Activated CD8-positive, alpha-beta T cell treated with anti-CD3 and anti-CD28 coated beads, Interleukin-2, amount 10 ng/mL, durations not matched to agents 7 days and 5 days (primary cell): ENCODE measurements at regions of chr7 and their contacts with region 1.

Region 1: GRCh38 chr7:121547544-121548092 is 151.5 kb upstream of the FAM3C start:
- DNase-seq: peak; percentile 33
- ATAC-seq: peak; percentile 82
- H3K4me3 Mint-ChIP-seq: no peak overlapping the region
- H3K27ac Mint-ChIP-seq: no peak overlapping the region
- H3K4me1 Mint-ChIP-seq: peaks cover 30% of the 10 kb centered on the region
- H3K27me3 Mint-ChIP-seq: no peaks in the 10 kb centered on the region

Region 2: DNA sequence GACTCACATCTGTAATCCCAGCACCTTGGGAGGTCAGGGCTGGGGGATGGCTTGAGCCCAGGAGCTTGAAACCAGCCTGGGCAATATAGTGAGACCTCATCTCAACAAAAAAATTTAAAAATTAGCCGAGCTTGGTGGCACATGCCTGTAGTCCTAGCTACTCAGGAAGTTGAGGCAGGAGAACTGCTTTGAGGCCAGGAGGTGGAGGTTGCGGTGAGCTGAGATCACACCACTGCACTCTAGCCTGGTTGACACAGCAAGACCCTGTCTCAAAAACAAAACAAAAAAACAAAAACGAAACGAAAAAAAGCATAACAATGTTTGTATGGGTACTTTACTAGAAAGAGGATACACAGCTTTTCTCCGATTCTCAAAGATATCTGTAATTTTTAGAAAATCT is 187.1 kb before region 1 on chr7:
- CTCF ChIA-PET with region 1: interaction called, 17 read pairs
- POLR2A ChIA-PET with region 1: no interaction called
- DNase-seq: peak; percentile 36
- ATAC-seq: peak; percentile 58
- H3K4me3 Mint-ChIP-seq: no peak overlapping the region
- H3K27ac Mint-ChIP-seq: peak overlapping the region; percentile 30
- H3K4me1 Mint-ChIP-seq: peaks cover 12% of the 10 kb centered on the region
- H3K27me3 Mint-ChIP-seq: no peaks in the 10 kb centered on the region

Region 3: GRCh38 chr7:121372376-121373010 is 175.1 kb before region 1 on chr7:
- CTCF ChIA-PET with region 1: interaction called, 91 read pairs
- POLR2A ChIA-PET with region 1: interaction called, 3 read pairs
- DNase-seq: no peak
- ATAC-seq: peak; percentile 71
- H3K4me3 Mint-ChIP-seq: peak overlapping the region; percentile 3
- H3K27ac Mint-ChIP-seq: peak overlapping the region; percentile 69
- H3K4me1 Mint-ChIP-seq: peaks cover 40% of the 10 kb centered on the region
- H3K27me3 Mint-ChIP-seq: no peaks in the 10 kb centered on the region

Region 4: GRCh38 chr7:121530227-121531174 is 17.1 kb before region 1 on chr7:
- CTCF ChIA-PET with region 1: interaction called, 17 read pairs
- POLR2A ChIA-PET with region 1: interaction called, 17 read pairs
- DNase-seq: peak; percentile 71
- ATAC-seq: peak; percentile 99
- H3K4me3 Mint-ChIP-seq: peak overlapping the region; percentile 32
- H3K27ac Mint-ChIP-seq: peak overlapping the region; percentile 90
- H3K4me1 Mint-ChIP-seq: peaks cover 30% of the 10 kb centered on the region
- H3K27me3 Mint-ChIP-seq: peaks cover 6% of the 10 kb centered on the region